ENCODE measurements at regions of chr10 and their contacts with region 1.

Region 1: DNA sequence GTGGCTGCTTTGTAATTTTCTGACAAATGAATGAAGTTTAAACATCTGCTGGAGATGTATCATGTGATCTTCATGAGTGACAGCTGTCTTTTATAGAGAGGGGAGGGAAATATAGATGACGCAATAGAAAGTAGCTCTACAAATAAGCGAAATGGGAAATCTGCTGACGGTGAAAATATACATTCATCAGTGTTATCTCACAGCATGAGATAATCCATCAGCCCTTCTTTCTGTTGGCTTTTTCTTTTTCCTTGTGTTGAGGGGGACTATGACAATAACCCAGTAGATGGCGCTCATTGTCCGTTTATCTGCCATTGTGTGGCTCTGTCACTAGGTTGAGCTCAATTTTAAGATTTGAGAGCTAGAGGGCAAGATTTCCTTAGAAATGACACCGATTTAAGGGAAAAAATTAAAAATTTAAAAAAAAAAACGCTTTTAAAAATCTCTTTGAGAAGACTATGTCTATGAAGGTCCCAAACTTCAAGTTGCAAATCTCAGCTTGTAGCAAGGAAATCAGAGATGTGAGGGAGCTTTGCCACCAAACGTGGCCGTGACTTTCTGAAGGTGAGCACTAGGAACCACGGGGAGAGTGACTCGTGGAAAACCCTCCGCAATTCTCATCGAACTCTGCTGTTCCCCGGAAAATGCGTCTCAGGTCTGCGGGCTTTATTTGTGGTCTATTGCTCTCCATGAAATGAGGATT is 114.6 kb upstream of the SFMBT2 start:
- DNase-seq: peak; percentile 81
- H3K4me3 Mint-ChIP-seq: no peak overlapping the region
- H3K27ac Mint-ChIP-seq: no peak overlapping the region
- H3K4me1 Mint-ChIP-seq: peaks cover 38% of the 10 kb centered on the region
- H3K27me3 Mint-ChIP-seq: peaks cover 10% of the 10 kb centered on the region

Region 2: DNA sequence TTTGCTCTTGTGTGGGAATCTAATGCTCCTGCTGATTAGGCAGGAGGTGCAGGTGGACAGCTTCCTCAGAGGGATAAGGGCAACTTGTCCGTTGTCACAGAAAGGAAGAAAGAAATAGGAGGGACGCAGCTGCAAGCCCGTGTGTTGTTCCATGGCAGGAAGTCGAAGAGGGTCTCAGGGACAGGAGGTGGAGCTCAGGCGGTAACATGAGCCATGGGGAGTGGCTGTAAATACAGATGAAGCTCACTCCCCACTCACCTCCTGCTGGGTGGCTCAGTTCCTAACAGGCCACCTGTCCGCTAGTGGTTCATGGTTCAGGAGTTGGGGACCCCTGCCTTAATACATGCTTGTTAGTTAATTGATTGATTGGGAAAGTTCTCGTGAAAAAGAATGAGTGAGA is 13.0 kb before region 1 on chr10:
- CTCF ChIA-PET with region 1: interaction called, 17 read pairs
- POLR2A ChIA-PET with region 1: no interaction called
- DNase-seq: no peak
- H3K4me3 Mint-ChIP-seq: no peak overlapping the region
- H3K27ac Mint-ChIP-seq: peak overlapping the region; percentile 56
- H3K4me1 Mint-ChIP-seq: peaks cover 45% of the 10 kb centered on the region
- H3K27me3 Mint-ChIP-seq: no peaks in the 10 kb centered on the region

Region 3: GRCh38 chr10:7687228-7687907 is 161.9 kb after region 1 on chr10:
- CTCF ChIA-PET with region 1: interaction called, 29 read pairs
- POLR2A ChIA-PET with region 1: no interaction called
- DNase-seq: peak; percentile 87
- H3K4me3 Mint-ChIP-seq: no peak overlapping the region
- H3K27ac Mint-ChIP-seq: no peak overlapping the region
- H3K4me1 Mint-ChIP-seq: peaks cover 3% of the 10 kb centered on the region
- H3K27me3 Mint-ChIP-seq: peaks cover 15% of the 10 kb centered on the region

Measured in activated CD4-positive, alpha-beta T cell treated with anti-CD3 and anti-CD28 coated beads, Interleukin-2, amount 10 ng/mL, durations not matched to agents 7 days and 5 days (primary cell).